A673 (cell line): ENCODE measurements at regions of chr17 and their contacts with region 1.

Region 1: GRCh38 chr17:61660728-61661485 is 69.9 kb upstream of the NACA2 start:
- DNase-seq: no peak
- H3K4me3 ChIP-seq: no peak overlapping the region
- H3K27ac ChIP-seq: no peak overlapping the region
- H3K4me1 ChIP-seq: no peaks in the 10 kb centered on the region
- H3K27me3 ChIP-seq: no peaks in the 10 kb centered on the region
- CTCF ChIP-seq: no peak

Region 2: GRCh38 chr17:61556224-61557188 is 104.4 kb before region 1 on chr17:
- CTCF ChIA-PET with region 1: interaction called, 11 read pairs
- POLR2A ChIA-PET with region 1: no interaction called
- intact Hi-C with region 1: no loop called
- DNase-seq: no peak
- H3K4me3 ChIP-seq: no peak overlapping the region
- H3K27ac ChIP-seq: no peak overlapping the region
- H3K4me1 ChIP-seq: peaks cover 3% of the 10 kb centered on the region
- H3K27me3 ChIP-seq: no peaks in the 10 kb centered on the region
- CTCF ChIP-seq: no peak

Region 3: DNA sequence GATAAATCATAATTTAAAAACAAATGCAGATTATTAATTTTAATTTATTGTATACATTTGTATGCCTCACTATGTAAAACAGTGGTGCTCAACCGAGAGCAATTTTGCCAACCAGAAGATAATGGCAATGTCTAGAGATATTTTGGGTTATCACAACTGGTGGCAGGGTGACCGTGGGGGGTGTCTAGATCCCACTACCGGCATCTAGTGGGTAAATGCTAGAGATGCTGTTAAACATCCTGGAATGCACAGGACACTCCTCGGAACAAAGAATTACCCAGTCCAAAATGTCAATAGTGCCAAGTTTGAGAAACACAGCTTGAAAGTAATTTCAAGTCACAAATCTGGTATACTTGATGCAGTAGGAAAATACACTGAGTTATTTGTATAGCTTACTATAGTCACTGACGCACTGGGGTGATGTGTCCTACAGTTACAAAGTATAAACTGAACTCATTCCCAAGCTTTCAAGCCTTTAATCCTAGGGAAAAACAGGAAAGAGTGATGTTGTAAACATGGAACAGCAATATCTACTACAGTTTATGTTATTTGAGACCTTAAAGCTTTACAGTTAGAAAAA is 68.9 kb after region 1 on chr17:
- CTCF ChIA-PET with region 1: no interaction called
- POLR2A ChIA-PET with region 1: no interaction called
- intact Hi-C with region 1: no loop called
- DNase-seq: peak; percentile 1
- H3K4me3 ChIP-seq: no peak overlapping the region
- H3K27ac ChIP-seq: no peak overlapping the region
- H3K4me1 ChIP-seq: no peaks in the 10 kb centered on the region
- H3K27me3 ChIP-seq: no peaks in the 10 kb centered on the region
- CTCF ChIP-seq: no peak